Activated T-helper 2 cell treated with anti-CD3 and anti-CD28 coated beads, Interferon-gamma antibody, Interleukin-2, Interleukin-4, amounts not matched to agents 10 μg/mL and 5 μg/mL and 100 μg/mL, durations not matched to agents 14 hours and 24 hours and 36 hours (primary cell): ENCODE measurements at regions of chr4 and their contacts with region 1.

Region 1: DNA sequence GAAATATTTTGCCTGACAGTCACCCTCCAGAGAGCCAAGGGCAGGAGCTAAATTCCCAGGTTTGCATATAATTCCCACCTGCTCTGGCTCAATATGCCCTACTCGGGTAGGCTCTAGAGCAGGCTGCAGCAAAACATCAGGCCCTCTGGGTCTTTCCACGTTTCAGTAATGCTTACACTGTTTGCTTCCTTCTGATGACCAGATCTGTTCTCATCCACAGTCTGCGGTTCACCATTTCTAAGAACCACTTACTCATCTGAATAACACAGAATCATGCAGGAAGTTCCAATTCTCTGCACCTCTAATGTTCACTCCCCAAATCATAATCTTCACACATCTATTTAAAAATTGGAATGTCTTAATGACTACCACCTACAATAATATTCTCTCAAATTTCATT is 141.4 kb downstream of the PPP3CA start:
- DNase-seq: peak; percentile 46
- H3K4me3 Mint-ChIP-seq: no peak overlapping the region
- H3K27ac Mint-ChIP-seq: peak overlapping the region; percentile 42
- H3K4me1 Mint-ChIP-seq: peaks cover 30% of the 10 kb centered on the region
- H3K27me3 Mint-ChIP-seq: peaks cover 2% of the 10 kb centered on the region

Region 2: GRCh38 chr4:101103381-101104142 is 102.4 kb before region 1 on chr4:
- intact Hi-C with region 1: loop called (anchors 5 kb)
- DNase-seq: no peak
- H3K4me3 Mint-ChIP-seq: peak overlapping the region; percentile 11
- H3K27ac Mint-ChIP-seq: peak overlapping the region; percentile 52
- H3K4me1 Mint-ChIP-seq: peaks cover 25% of the 10 kb centered on the region
- H3K27me3 Mint-ChIP-seq: no peaks in the 10 kb centered on the region

Region 3: GRCh38 chr4:101155368-101155767 is 50.5 kb before region 1 on chr4:
- intact Hi-C with region 1: loop called (anchors 1 kb)
- DNase-seq: no peak
- H3K4me3 Mint-ChIP-seq: no peak overlapping the region
- H3K27ac Mint-ChIP-seq: no peak overlapping the region
- H3K4me1 Mint-ChIP-seq: peaks cover 29% of the 10 kb centered on the region
- H3K27me3 Mint-ChIP-seq: no peaks in the 10 kb centered on the region

Region 4: GRCh38 chr4:101282076-101282844 is 76.3 kb after region 1 on chr4:
- intact Hi-C with region 1: loop called (anchors 5 kb)
- DNase-seq: no peak
- H3K4me3 Mint-ChIP-seq: no peak overlapping the region
- H3K27ac Mint-ChIP-seq: no peak overlapping the region
- H3K4me1 Mint-ChIP-seq: peaks cover 29% of the 10 kb centered on the region
- H3K27me3 Mint-ChIP-seq: peaks cover 2% of the 10 kb centered on the region

Region 5: GRCh38 chr4:101328063-101328602 is 122.2 kb after region 1 on chr4:
- intact Hi-C with region 1: no loop called
- DNase-seq: no peak
- H3K4me3 Mint-ChIP-seq: peak overlapping the region; percentile 46
- H3K27ac Mint-ChIP-seq: peak overlapping the region; percentile 88
- H3K4me1 Mint-ChIP-seq: peaks cover 34% of the 10 kb centered on the region
- H3K27me3 Mint-ChIP-seq: peaks cover 24% of the 10 kb centered on the region

Region 6: DNA sequence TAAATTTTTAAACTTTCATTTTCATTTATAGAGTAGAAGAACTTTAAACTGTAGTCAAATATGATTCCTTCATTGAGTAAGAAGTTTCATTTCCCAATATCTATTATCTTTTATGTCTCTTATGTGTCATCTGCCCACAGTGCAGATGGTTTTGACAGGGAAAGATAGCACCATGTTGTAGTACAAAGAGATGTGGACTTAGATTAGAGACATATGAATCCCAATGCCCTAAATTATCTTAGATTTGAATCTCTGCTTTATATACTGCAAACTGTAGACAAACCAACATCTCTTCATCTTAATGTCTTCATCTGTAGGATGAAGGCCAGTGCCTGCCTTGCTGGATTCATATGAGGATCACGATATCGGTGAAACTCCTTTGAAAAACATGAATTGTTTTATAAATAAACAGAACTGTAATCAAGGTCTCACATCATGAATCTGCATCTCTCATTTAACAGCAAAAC is 802.1 kb after region 1 on chr4:
- intact Hi-C with region 1: loop called (anchors 5 kb)
- DNase-seq: no peak
- H3K4me3 Mint-ChIP-seq: no peak overlapping the region
- H3K27ac Mint-ChIP-seq: no peak overlapping the region
- H3K4me1 Mint-ChIP-seq: peaks cover 14% of the 10 kb centered on the region
- H3K27me3 Mint-ChIP-seq: peaks cover 18% of the 10 kb centered on the region